ENCODE measurements at regions of chr4 and their contacts with region 1.

Region 1: DNA sequence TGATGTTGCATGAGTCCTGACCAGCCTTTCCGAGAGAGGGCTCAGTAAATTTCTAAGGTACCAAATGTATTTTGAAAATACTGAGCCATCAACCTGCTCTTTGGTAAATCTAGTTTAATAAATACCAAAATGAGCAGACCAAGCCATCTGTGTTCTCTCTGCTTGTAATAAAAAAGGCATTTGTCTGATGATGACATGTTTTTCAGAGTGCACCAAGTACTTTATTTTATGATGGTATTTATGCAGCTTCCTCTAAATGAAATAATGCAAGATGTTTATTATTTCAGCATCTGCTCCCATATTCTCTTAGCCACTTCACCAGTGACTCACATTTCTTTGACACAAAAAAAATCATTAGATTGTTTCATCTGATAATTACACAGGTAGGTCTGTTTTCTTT is 700.5 kb downstream of the TRIML1 start:
- DNase-seq: no peak
- H3K4me3 ChIP-seq: no peak overlapping the region
- H3K27ac ChIP-seq: no peak overlapping the region
- H3K4me1 ChIP-seq: no peaks in the 10 kb centered on the region
- H3K27me3 ChIP-seq: no peaks in the 10 kb centered on the region
- CTCF ChIP-seq: no peak

Region 2: GRCh38 chr4:188781655-188782054 is 58.0 kb before region 1 on chr4:
- CTCF ChIA-PET with region 1: no interaction called
- POLR2A ChIA-PET with region 1: no interaction called
- intact Hi-C with region 1: no loop called
- DNase-seq: no peak
- H3K4me3 ChIP-seq: no peak overlapping the region
- H3K27ac ChIP-seq: no peak overlapping the region
- H3K4me1 ChIP-seq: no peaks in the 10 kb centered on the region
- H3K27me3 ChIP-seq: no peaks in the 10 kb centered on the region; the same call in 1 of the 2 replicates
- CTCF ChIP-seq: peak; percentile 25; the same call in 1 of the 2 replicates

Region 3: DNA sequence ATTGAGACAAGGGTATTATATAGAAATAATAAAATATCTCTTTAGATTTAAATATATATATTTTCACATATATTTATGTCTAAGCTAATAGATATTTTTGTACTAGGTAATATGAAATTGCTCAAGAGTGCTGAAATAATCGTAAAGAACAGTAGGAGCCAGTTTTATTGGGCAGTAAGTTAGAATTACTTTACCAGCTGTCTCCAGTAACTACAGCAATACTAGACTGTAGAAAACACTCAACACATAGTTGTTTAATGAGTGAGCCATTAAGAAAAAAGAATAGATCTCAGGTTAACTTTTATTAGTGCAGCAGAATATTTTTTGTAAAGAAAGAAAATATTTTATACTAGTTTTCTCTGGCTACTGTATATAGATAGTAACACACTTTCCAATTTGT is 14.7 kb after region 1 on chr4:
- CTCF ChIA-PET with region 1: no interaction called
- POLR2A ChIA-PET with region 1: no interaction called
- intact Hi-C with region 1: no loop called
- DNase-seq: no peak
- H3K4me3 ChIP-seq: no peak overlapping the region
- H3K27ac ChIP-seq: no peak overlapping the region
- H3K4me1 ChIP-seq: no peaks in the 10 kb centered on the region
- H3K27me3 ChIP-seq: no peaks in the 10 kb centered on the region
- CTCF ChIP-seq: no peak

Region 4: GRCh38 chr4:188941524-188942119 is 101.9 kb after region 1 on chr4:
- CTCF ChIA-PET with region 1: no interaction called
- POLR2A ChIA-PET with region 1: no interaction called
- intact Hi-C with region 1: no loop called
- DNase-seq: peak in 1 of 2 experiments; percentile 47
- H3K4me3 ChIP-seq: no peak overlapping the region
- H3K27ac ChIP-seq: peak overlapping the region; percentile 53
- H3K4me1 ChIP-seq: no peaks in the 10 kb centered on the region
- H3K27me3 ChIP-seq: no peaks in the 10 kb centered on the region
- CTCF ChIP-seq: no peak

Region 5: GRCh38 chr4:189779281-189779980 is 939.7 kb after region 1 on chr4:
- CTCF ChIA-PET with region 1: no interaction called
- POLR2A ChIA-PET with region 1: interaction called, 12 read pairs
- intact Hi-C with region 1: no loop called
- DNase-seq: no peak
- H3K4me3 ChIP-seq: no peak overlapping the region
- H3K27ac ChIP-seq: no peak overlapping the region
- H3K4me1 ChIP-seq: no peaks in the 10 kb centered on the region
- H3K27me3 ChIP-seq: no peaks in the 10 kb centered on the region
- CTCF ChIP-seq: no peak